Colonic mucosa (tissue), 4 donors: ENCODE measurements at regions of chr2 and their contacts with region 1.

Region 1: GRCh38 chr2:218301176-218301819 is 9.0 kb upstream of the TMBIM1 start:
- DNase-seq: peak; percentile 94
- H3K4me3 ChIP-seq: no peak overlapping the region
- H3K27ac ChIP-seq: no peak overlapping the region
- H3K4me1 ChIP-seq: no peaks in the 10 kb centered on the region
- H3K27me3 ChIP-seq: no peaks in the 10 kb centered on the region
- CTCF ChIP-seq: peak; percentile 96

Region 2: GRCh38 chr2:218257390-218257981 is 43.8 kb before region 1 on chr2:
- intact Hi-C with region 1: no loop called
- DNase-seq: no peak
- H3K4me3 ChIP-seq: no peak overlapping the region
- H3K27ac ChIP-seq: peak overlapping the region; percentile 11
- H3K4me1 ChIP-seq: peaks cover 7% of the 10 kb centered on the region
- H3K27me3 ChIP-seq: no peaks in the 10 kb centered on the region
- CTCF ChIP-seq: no peak

Region 3: GRCh38 chr2:218357236-218358159 is 56.2 kb after region 1 on chr2:
- intact Hi-C with region 1: loop called (anchors 2 kb)
- DNase-seq: no peak
- H3K4me3 ChIP-seq: no peak overlapping the region
- H3K27ac ChIP-seq: no peak overlapping the region
- H3K4me1 ChIP-seq: no peaks in the 10 kb centered on the region
- H3K27me3 ChIP-seq: no peaks in the 10 kb centered on the region
- CTCF ChIP-seq: no peak

Region 4: GRCh38 chr2:218394298-218395089 is 93.2 kb after region 1 on chr2:
- intact Hi-C with region 1: loop called (anchors 5 kb)
- DNase-seq: no peak
- H3K4me3 ChIP-seq: no peak overlapping the region
- H3K27ac ChIP-seq: no peak overlapping the region
- H3K4me1 ChIP-seq: peaks cover 4% of the 10 kb centered on the region
- H3K27me3 ChIP-seq: no peaks in the 10 kb centered on the region
- CTCF ChIP-seq: no peak

Region 5: DNA sequence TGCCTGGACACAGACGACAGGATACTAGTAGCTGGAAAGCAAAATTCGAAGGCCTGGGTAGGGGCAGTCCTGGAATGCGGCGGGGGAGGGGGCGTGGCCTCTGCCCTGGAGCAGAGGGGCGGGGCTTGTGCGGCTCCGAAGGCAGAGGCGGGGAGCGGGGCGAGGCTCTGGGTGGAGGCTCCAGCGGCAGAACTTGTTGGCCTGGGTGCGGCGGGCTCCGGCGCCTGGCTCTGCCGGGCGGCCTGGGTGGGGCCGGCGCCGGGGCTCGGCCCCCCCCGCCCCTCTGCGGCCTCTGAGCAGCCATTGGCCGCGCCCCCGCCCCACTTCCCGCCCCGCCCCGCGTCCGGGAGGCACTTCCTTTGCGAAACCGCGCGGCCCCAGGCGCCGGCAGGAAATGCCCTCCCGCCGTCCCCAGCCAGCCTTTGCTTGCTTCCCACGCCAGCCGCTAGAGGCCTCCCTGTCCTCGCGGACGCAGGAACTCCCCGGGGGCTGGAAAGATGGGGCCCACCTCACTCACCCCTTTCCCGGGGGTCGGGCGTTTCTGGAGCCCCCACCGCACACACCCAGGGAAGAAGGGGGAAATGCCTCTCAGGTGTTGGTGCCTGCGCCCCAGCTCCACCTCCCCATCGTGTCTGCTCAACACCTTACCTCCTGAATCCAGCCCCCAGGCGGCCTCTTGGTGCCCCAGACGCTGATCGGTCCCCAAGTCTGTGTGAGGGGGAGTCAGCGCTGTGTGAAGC is 105.1 kb after region 1 on chr2:
- intact Hi-C with region 1: no loop called
- DNase-seq: peak; percentile 98
- H3K4me3 ChIP-seq: peak overlapping the region; percentile 34
- H3K27ac ChIP-seq: peak overlapping the region; percentile 89
- H3K4me1 ChIP-seq: peaks cover 13% of the 10 kb centered on the region
- H3K27me3 ChIP-seq: no peaks in the 10 kb centered on the region
- CTCF ChIP-seq: peak; percentile 62

Region 6: GRCh38 chr2:218466016-218466521 is 164.8 kb after region 1 on chr2:
- intact Hi-C with region 1: loop called (anchors 5 kb)
- DNase-seq: no peak
- H3K4me3 ChIP-seq: no peak overlapping the region
- H3K27ac ChIP-seq: no peak overlapping the region
- H3K4me1 ChIP-seq: no peaks in the 10 kb centered on the region
- H3K27me3 ChIP-seq: no peaks in the 10 kb centered on the region
- CTCF ChIP-seq: no peak